ENCODE measurements at regions of chr19 and their contacts with region 1.

Region 1: DNA sequence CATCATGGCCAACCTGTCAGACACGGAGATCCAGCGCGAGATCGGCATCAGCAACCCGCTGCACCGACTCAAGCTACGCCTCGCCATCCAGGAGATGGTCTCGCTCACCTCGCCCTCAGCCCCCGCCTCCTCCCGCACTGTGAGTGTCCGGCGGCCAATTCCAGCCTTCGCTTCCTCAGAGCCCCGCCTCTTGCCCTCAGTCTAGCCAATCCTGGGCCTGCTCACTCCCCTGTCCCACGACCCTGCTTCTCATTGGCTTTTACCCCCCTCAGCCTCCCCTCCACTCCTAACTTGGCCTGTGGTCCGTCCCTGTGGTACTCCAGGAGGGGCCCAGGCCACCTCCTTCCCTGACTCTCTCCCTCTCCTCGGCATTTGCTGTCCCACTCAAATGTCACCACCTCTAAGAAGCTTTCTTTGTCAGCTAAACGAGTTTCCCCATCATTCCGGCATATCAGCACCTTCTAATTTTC is 12.3 kb downstream of the HRC start:
- DNase-seq: peak; percentile 88
- ATAC-seq: peak; percentile 97
- H3K4me3 ChIP-seq: peak overlapping the region; percentile 76
- H3K27ac ChIP-seq: no peak overlapping the region
- H3K4me1 ChIP-seq: no peaks in the 10 kb centered on the region
- H3K27me3 ChIP-seq: no peaks in the 10 kb centered on the region
- CTCF ChIP-seq: no peak

Region 2: DNA sequence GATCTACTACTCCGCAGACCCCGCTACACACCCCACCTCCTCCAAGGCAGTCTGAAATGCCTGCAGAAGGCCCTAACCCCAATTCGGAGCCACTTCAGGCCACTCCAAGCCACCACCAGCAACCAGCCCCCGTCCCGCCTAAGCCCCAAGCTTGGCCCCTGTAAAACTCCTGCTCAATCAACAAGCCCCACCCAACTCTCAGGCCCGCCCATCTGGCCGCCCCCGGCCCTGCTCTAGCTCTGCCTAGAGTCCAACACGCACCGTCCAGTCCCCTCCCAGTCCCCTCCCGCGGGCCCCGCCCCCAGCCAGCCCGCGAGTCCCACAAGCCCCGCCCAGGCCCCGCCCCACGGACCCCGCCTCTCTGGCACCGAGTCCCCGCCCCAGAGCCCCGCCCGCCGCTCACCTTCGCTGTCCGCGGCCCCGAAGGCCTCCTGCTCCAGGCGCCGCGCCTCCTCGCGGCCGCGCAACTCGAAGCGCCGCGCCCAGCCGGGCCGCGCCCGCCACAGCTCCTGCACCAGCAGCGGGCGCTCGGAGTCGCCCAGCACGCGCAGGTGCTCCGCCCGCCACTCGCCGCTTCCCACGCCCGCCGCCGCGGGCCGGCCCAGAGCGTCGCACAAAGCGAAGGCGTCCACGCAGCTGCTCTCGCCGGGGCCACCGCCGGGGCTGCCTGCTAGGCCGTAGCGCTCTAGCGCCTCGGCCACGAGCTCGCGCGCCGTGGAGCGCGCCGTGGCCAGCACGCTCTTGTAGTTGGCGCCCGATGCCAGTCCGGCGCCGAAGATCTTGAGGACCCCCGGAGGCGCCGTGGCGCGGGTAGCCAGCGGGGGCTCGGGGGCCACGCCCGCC is 404.1 kb before region 1 on chr19:
- CTCF ChIA-PET with region 1: no interaction called
- POLR2A ChIA-PET with region 1: no interaction called
- intact Hi-C with region 1: no loop called
- DNase-seq: peak; percentile 87
- ATAC-seq: peak; percentile 96
- H3K4me3 ChIP-seq: no peak overlapping the region
- H3K27ac ChIP-seq: no peak overlapping the region
- H3K4me1 ChIP-seq: no peaks in the 10 kb centered on the region; the same call in 1 of the 2 replicates
- H3K27me3 ChIP-seq: no peaks in the 10 kb centered on the region
- CTCF ChIP-seq: peak; percentile 27; the same call in 1 of the 2 replicates

Region 3: GRCh38 chr19:49127674-49128544 is 15.0 kb before region 1 on chr19:
- CTCF ChIA-PET with region 1: no interaction called
- POLR2A ChIA-PET with region 1: no interaction called
- intact Hi-C with region 1: loop called (anchors 2 kb)
- DNase-seq: peak; percentile 90
- ATAC-seq: peak; percentile 94
- H3K4me3 ChIP-seq: peak overlapping the region; percentile 59
- H3K27ac ChIP-seq: no peak overlapping the region
- H3K4me1 ChIP-seq: no peaks in the 10 kb centered on the region; the same call in none of the 2 replicates
- H3K27me3 ChIP-seq: no peaks in the 10 kb centered on the region
- CTCF ChIP-seq: no peak